ENCODE measurements at regions of chr13 and their contacts with region 1.

Region 1: GRCh38 chr13:20489185-20489820 is 36.4 kb downstream of the CRYL1 start:
- DNase-seq: peak in 20 of 42 donors; percentile 22 to 82 (median 54)

Region 2: DNA sequence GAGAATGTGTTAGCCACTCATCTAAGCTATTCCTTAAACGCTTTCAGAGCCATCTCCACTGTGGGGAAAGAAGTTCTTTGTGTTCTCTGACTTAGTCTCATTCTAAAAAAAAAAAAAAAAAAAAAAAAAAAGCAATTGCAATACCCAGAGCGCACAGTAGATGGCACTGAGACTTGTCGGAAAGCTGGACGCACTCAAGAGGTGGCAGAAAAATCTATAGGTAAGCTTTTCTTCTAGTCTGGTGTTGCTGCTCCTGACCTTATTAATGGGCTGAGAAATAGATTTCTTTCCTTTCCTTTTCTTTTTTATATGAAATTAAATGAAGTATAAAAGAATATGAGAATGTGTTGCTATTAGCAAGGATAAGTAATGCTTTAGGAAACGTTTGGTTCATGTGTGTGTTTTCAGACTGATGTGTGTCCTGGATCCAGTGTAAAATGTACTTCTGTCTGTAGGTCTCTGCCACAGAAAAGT is 291.9 kb before region 1 on chr13:
- intact Hi-C with region 1: loop called (anchors 10 kb)
- DNase-seq: peak in 2 of 42 donors; percentile 38 to 50

Region 3: GRCh38 chr13:20860844-20861243 is 371.5 kb after region 1 on chr13:
- intact Hi-C with region 1: no loop called
- DNase-seq: no peak

Measured in head of caudate nucleus (tissue), 42 donors.